Right ventricle myocardium inferior (tissue), 1 donor: ENCODE measurements at regions of chr7 and their contacts with region 1.

Region 1: GRCh38 chr7:73342645-73343044 is 14.7 kb downstream of the FKBP6 start:
- DNase-seq: no peak
- ATAC-seq: peak; percentile 85

Region 2: DNA sequence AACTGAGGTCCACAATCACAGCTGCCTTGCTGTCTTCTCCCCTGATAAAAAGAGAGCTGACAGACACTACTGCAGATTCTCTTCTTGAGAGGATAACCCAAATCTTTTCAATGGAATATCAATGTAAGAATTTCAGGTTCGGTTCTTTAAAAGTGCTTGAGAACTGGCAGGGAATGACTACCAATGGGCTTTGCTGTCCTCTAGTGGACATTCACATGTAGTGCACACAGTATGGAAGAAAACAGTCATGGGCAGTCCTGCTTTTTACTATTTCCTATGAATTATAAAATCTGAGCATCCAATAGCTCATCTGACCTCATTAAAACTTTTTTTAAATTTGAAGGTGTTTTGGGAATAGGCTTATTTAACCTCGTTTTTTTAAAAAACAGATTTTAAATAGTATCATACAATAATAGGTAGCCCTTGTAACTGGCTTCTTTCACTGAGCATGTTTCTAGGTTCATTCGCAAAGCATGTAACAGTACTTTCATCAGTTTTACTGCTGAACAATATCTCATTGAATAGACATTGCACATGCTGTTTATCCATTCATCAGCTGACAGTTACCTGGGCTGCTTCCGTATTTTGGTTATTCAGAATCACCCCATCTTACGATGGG is 109.2 kb after region 1 on chr7:
- intact Hi-C with region 1: loop called (anchors 2 kb)
- DNase-seq: no peak
- ATAC-seq: peak; percentile 60